Activated CD4-positive, alpha-beta T cell treated with anti-CD3 and anti-CD28 coated beads for 36 hours (primary cell): ENCODE measurements at regions of chr5 and their contacts with region 1.

Region 1: DNA sequence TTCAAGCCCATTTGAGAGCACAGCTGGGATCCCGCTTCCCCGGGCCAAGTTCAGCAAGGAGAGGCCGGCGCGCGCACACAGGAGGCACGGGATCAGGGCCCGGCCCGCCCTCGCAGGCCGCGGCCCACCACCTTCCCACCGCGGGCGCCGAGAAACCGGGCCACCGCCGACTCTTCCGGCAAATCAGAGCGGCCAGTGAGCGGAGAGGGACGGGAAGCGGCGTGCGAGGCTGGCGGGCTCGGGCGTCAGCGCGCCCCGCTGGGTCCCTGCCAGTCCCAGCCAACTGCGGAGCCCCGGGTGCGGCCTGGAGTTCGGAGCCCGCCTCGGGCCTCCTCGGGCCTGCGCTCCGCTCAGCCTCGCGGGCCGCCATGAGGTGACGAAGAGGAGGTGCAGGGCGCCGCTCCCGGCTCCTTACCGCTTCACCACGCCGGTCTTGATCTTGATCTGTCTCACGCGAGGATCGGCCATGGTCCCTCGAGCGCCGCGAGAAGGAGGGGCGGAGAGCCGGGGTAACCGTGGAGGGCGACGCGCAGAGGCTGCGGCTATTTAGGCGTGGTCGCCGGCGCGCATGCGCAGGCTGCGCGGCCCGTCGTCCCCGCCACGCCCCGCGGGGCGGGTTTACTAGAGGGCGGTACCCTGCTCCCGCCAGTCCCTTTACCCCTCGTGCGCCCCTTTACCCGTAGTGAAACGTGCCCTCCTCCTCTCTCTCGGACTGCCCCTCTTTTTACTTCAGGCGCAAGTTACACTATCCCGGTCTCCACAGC is at the start of gene TBCA:
- DNase-seq: peak; percentile 92
- ATAC-seq: peak; percentile 88
- H3K4me3 Mint-ChIP-seq: peak within 1 kb of the TSS; percentile 98
- H3K27ac Mint-ChIP-seq: peak within 1 kb of the TSS; percentile 95
- H3K4me1 Mint-ChIP-seq: peaks cover 52% of the 10 kb centered on the region
- H3K27me3 Mint-ChIP-seq: no peaks in the 10 kb centered on the region
- total RNA-seq, gene TBCA: 195 to 210 TPM

Region 2: GRCh38 chr5:77645158-77645994 is 130.6 kb before region 1 on chr5:
- CTCF ChIA-PET with region 1: interaction called, 3 read pairs
- POLR2A ChIA-PET with region 1: no interaction called
- intact Hi-C with region 1: loop called in 1 of 2 experiments (anchors 10 kb)
- DNase-seq: peak; percentile 61
- ATAC-seq: peak; percentile 57
- H3K4me3 Mint-ChIP-seq: peak overlapping the region; percentile 50
- H3K27ac Mint-ChIP-seq: no peak overlapping the region
- H3K4me1 Mint-ChIP-seq: peaks cover 19% of the 10 kb centered on the region
- H3K27me3 Mint-ChIP-seq: peaks cover 74% of the 10 kb centered on the region

Region 3: GRCh38 chr5:77718934-77719610 is 56.9 kb before region 1 on chr5:
- CTCF ChIA-PET with region 1: no interaction called
- POLR2A ChIA-PET with region 1: no interaction called
- intact Hi-C with region 1: no loop called
- DNase-seq: no peak
- ATAC-seq: peak; percentile 53
- H3K4me3 Mint-ChIP-seq: no peak overlapping the region
- H3K27ac Mint-ChIP-seq: no peak overlapping the region
- H3K4me1 Mint-ChIP-seq: peaks cover 16% of the 10 kb centered on the region
- H3K27me3 Mint-ChIP-seq: no peaks in the 10 kb centered on the region

Region 4: GRCh38 chr5:77852514-77853352 is 76.8 kb after region 1 on chr5:
- CTCF ChIA-PET with region 1: no interaction called
- POLR2A ChIA-PET with region 1: no interaction called
- intact Hi-C with region 1: loop called in 1 of 2 experiments (anchors 5 kb)
- DNase-seq: peak; percentile 47
- ATAC-seq: peak; percentile 74
- H3K4me3 Mint-ChIP-seq: peak overlapping the region; percentile 63
- H3K27ac Mint-ChIP-seq: no peak overlapping the region
- H3K4me1 Mint-ChIP-seq: peaks cover 15% of the 10 kb centered on the region
- H3K27me3 Mint-ChIP-seq: peaks cover 40% of the 10 kb centered on the region

Region 5: GRCh38 chr5:78294248-78295034 is 518.5 kb after region 1 on chr5 and contains the start of gene AP3B1:
- CTCF ChIA-PET with region 1: no interaction called
- POLR2A ChIA-PET with region 1: no interaction called
- intact Hi-C with region 1: loop called (anchors 1 to 5 kb)
- DNase-seq: peak; percentile 99
- ATAC-seq: peak; percentile 94
- H3K4me3 Mint-ChIP-seq: peak within 1 kb of the TSS; percentile 88
- H3K27ac Mint-ChIP-seq: peak within 1 kb of the TSS; percentile 99
- H3K4me1 Mint-ChIP-seq: peaks cover 33% of the 10 kb centered on the region
- H3K27me3 Mint-ChIP-seq: no peaks in the 10 kb centered on the region
- total RNA-seq, gene AP3B1: 41.2 to 55.7 TPM